ENCODE measurements at regions of chr12 and their contacts with region 1.

Region 1: DNA sequence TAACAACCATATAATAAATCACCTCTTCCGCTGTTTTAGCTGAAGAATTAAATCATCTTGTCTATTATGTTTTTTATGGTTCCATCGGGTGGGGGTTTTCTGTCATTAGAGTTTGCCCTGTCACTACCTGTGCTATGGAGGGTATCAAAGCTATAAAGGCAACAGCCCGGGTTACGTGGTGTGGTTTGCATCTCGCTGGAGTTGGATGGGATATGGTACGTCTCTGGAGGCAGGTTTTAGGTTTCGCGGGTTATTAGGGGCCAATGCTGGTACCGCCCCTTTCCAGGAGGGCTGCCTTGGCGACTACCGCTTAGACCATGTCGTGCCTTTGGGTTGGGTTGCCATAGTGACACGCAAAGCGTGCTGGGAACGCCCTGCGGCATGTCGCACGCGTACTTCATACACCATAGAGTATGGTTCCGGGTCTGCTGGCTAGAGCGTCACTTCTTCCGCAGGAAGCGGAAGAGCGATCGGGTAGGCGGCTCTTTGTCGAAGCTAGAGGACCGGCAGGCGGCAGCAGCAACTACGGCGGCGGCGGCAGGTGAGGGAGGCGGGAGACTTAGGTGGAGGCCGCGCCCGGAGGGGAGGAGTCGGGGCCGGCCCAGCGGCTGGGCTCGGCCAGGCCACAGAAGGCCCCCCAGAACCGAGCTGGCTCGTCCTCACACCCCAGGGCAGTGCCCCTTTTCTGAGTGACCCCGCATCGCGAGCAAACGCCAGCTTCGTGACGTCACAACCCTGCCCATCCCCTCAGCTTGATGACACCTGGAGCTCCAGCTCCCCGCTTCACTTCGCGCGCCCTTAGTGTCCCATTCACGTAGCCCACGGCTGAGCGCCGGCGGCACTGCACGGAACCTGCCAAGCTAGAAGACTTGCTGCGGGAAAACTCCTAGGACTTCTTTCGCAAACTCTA is at the start of gene ZC3H10:
- DNase-seq: peak; percentile 99
- ATAC-seq: peak; percentile 73
- H3K4me3 ChIP-seq: peak within 1 kb of the TSS; percentile 80 to 82
- H3K27ac ChIP-seq: peak within 1 kb of the TSS; percentile 93
- H3K4me1 ChIP-seq: peaks cover 23 to 34% of the 10 kb centered on the region in 2 experiments
- H3K27me3 ChIP-seq: no peaks in the 10 kb centered on the region
- CTCF ChIP-seq: peak in 2 of 3 experiments; percentile 30 to 37; a peak in 3 of 6 replicates
- POLR2A ChIP-seq: peak; percentile 99
- RAD21 ChIP-seq: no peak
- total RNA-seq, gene ZC3H10: 8.7 TPM

Region 2: DNA sequence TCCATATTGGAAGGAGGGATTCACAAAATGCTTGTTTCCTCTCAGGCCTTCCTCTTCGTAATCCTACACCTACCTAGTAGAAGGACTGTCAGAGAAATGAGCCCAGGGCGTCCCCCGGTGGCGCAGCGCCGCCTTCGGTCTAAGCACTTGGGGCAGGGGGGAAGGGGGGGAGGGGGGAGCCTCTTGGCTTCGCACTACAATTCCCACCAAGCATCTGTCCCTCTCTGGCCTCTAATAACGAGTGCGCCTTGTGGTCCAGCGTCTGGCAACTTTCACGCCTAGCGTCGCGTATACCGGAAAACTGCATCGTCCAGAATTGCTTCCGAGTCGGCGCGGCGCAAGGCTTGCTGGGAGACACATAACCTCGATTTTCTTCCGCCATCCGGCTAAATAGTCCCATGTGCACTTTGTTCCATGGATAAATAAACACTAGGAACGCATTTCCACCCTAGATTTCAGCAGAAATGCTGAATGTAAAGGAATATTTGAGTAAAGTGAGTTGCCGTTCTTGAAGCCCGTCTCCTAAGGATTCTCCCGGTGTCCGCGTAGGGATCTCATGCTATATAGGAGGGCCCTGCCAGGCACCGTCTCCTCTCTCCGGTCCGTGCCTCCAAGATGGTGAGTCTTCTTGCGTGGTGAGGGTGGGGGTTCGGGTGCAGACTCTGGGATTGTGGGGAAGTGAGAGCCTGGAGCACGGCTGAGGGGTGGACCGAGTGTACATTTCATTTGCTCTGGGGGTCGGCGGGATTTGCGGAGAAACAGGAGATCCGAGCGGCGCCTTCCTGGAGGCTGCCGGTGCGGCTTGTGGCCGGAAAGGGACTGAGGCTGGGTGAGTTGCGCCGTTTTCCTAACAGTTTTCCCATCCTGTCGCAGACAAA is 76.2 kb before region 1 on chr12 and contains the start of gene RPS26:
- CTCF ChIA-PET with region 1: interaction called, 5 read pairs
- POLR2A ChIA-PET with region 1: interaction called, 19 read pairs
- RAD21 ChIA-PET with region 1: no interaction called
- intact Hi-C with region 1: loop called (anchors 2 kb)
- DNase-seq: peak; percentile 100
- ATAC-seq: peak; percentile 88
- H3K4me3 ChIP-seq: peak within 1 kb of the TSS; percentile 90 to 99
- H3K27ac ChIP-seq: peak within 1 kb of the TSS; percentile 90
- H3K4me1 ChIP-seq: peaks cover 16 to 39% of the 10 kb centered on the region in 2 experiments
- H3K27me3 ChIP-seq: no peaks in the 10 kb centered on the region
- CTCF ChIP-seq: peak; percentile 39 to 75 (median 42)
- POLR2A ChIP-seq: peak; percentile 99
- RAD21 ChIP-seq: peak; percentile 81
- total RNA-seq, gene RPS26: 70.2 TPM

Region 3: DNA sequence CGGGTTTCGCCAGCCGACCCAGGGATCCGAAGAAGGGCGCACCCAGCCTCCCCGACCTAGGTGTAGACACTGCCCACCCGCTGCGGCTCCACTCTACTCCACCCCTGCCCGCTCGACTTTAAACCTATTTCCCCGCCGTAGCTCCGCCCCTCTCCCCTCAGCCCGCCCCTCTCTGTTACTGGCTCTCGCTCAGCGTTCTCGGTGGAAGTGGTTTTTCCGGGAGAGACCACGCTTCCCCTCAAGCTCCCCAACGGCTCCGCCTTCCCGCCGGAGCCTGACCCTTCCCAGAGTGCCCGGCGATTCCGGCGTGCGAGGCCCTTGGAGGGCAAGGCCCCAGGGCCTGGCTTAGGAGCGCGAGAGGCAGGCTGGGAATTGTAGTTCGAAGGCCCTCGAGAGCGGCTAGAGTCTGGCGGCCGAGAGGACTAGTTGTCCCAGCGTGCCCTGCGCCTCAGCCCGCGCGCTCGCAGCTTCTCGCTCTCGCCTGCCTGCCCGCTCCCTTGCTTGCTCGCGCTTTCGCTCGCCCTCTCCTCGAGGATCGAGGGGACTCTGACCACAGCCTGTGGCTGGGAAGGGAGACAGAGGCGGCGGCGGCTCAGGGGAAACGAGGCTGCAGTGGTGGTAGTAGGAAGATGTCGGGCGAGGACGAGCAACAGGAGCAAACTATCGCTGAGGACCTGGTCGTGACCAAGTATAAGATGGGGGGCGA is 13.8 kb before region 1 on chr12 and contains the start of gene PA2G4:
- CTCF ChIA-PET with region 1: interaction called, 6 read pairs
- POLR2A ChIA-PET with region 1: interaction called, 75 read pairs
- RAD21 ChIA-PET with region 1: no interaction called
- intact Hi-C with region 1: loop called (anchors 1 kb)
- DNase-seq: peak; percentile 98
- ATAC-seq: peak; percentile 95
- H3K4me3 ChIP-seq: peak within 1 kb of the TSS; percentile 88 to 98
- H3K27ac ChIP-seq: peak within 1 kb of the TSS; percentile 94
- H3K4me1 ChIP-seq: peaks cover 9 to 26% of the 10 kb centered on the region in 2 experiments
- H3K27me3 ChIP-seq: no peaks in the 10 kb centered on the region
- CTCF ChIP-seq: no peak
- POLR2A ChIP-seq: peak; percentile 92
- RAD21 ChIP-seq: no peak
- total RNA-seq, gene PA2G4: 302 TPM

Region 4: GRCh38 chr12:56158029-56158925 is 40.2 kb after region 1 on chr12 and contains the start of gene MYL6:
- CTCF ChIA-PET with region 1: interaction called, 5 read pairs
- POLR2A ChIA-PET with region 1: interaction called, 7 read pairs
- RAD21 ChIA-PET with region 1: no interaction called
- intact Hi-C with region 1: loop called (anchors 2 kb)
- DNase-seq: peak; percentile 97
- ATAC-seq: peak; percentile 81
- H3K4me3 ChIP-seq: peak within 1 kb of the TSS; percentile 78 to 96
- H3K27ac ChIP-seq: peak within 1 kb of the TSS; percentile 94
- H3K4me1 ChIP-seq: peaks cover 14 to 27% of the 10 kb centered on the region in 2 experiments
- H3K27me3 ChIP-seq: no peaks in the 10 kb centered on the region
- CTCF ChIP-seq: no peak
- POLR2A ChIP-seq: peak; percentile 98
- RAD21 ChIP-seq: no peak
- total RNA-seq, gene MYL6: 554 TPM

Region 5: DNA sequence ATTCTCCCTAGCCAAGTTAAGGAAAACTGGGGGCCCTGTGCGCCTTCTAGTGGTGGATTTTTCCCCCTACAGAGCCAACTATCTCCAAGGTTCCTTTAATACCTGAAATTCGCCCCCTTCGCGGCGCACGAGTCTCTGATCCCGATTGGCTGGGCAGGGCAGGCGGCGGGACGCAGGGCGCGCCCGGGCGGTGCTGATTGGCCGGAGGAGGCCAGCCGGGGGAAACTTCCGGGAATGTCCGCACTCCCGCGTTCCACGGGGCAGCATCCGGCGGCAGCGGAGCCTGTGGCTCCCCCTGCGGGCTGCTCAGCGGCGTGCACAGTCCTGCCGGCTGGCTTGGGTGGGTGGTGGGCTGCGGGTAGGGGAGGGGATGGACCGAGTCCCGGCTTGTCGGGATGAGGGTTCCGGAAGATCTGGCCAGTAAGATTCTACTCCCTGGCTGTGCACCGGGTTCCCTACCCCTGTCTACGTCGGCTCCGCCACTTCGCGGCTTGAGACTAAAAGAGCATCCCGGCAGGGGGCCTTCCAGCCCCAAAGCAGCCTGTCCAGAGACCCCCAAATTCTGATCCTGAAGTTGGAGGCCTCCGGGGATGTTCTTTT is 106.2 kb after region 1 on chr12 and contains the start of gene NABP2:
- CTCF ChIA-PET with region 1: interaction called, 11 read pairs
- POLR2A ChIA-PET with region 1: interaction called, 12 read pairs
- RAD21 ChIA-PET with region 1: no interaction called
- intact Hi-C with region 1: loop called (anchors 1 kb)
- DNase-seq: peak; percentile 94
- ATAC-seq: peak; percentile 80
- H3K4me3 ChIP-seq: peak within 1 kb of the TSS; percentile 85 to 91
- H3K27ac ChIP-seq: peak within 1 kb of the TSS; percentile 82
- H3K4me1 ChIP-seq: peaks cover 8 to 35% of the 10 kb centered on the region in 2 experiments; a peak in 3 of 4 replicates
- H3K27me3 ChIP-seq: no peaks in the 10 kb centered on the region
- CTCF ChIP-seq: peak; percentile 72 to 97 (median 78)
- POLR2A ChIP-seq: no peak
- RAD21 ChIP-seq: peak; percentile 74
- total RNA-seq, gene NABP2: 52.9 TPM

Region 6: GRCh38 chr12:56299853-56300643 is 182.0 kb after region 1 on chr12 and contains the start of gene CS:
- CTCF ChIA-PET with region 1: interaction called, 3 read pairs
- POLR2A ChIA-PET with region 1: no interaction called
- RAD21 ChIA-PET with region 1: no interaction called
- intact Hi-C with region 1: loop called (anchors 2 kb)
- DNase-seq: peak; percentile 96
- ATAC-seq: peak; percentile 96
- H3K4me3 ChIP-seq: peak within 1 kb of the TSS; percentile 69 to 99
- H3K27ac ChIP-seq: peak within 1 kb of the TSS; percentile 74
- H3K4me1 ChIP-seq: peaks cover 22 to 44% of the 10 kb centered on the region in 2 experiments; a peak in 3 of 4 replicates
- H3K27me3 ChIP-seq: no peaks in the 10 kb centered on the region
- CTCF ChIP-seq: no peak
- POLR2A ChIP-seq: peak; percentile 42
- RAD21 ChIP-seq: no peak
- total RNA-seq, gene CS: 270 TPM

Measured in HCT116 (cell line).